PC-9 (cell line): ENCODE measurements at regions of chr12 and their contacts with region 1.

Region 1: DNA sequence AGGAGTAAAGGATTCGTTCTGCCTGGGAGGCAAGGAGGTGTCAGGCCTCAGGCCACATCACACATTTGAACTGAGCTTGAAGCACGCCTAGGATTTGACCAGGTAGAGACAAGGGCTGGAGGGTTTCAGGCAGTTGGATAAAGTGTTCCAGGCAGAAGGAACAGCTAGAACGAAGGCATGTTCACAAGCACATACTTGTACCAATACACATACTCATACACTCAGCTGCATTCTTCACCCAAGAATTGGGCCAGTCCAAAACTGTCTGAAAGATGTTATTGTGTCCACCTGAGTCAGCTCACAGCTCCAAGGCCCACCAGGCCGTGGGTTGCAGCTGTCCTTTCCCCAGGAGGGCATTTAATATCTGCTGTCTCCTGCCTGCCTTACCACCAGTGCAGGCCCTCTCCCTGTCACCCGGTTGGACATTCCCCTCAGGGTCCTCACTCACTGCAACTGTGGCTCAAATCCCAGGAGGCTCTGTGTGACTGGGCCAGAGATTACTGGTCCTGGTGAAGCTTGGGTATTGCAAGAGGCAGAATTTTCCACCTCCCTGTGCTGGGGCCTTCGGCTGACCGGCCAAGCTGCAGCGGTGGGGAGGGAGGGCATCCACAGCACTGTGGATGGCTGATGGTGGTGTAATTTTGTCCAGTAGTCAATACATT is 12.8 kb upstream of the AQP2 start:
- DNase-seq: no peak
- H3K4me3 ChIP-seq: no peak overlapping the region
- H3K27ac ChIP-seq: no peak overlapping the region
- H3K4me1 ChIP-seq: peaks cover 18% of the 10 kb centered on the region
- H3K27me3 ChIP-seq: no peaks in the 10 kb centered on the region
- CTCF ChIP-seq: no peak

Region 2: GRCh38 chr12:50006789-50007436 is 69.1 kb after region 1 on chr12:
- CTCF ChIA-PET with region 1: no interaction called
- POLR2A ChIA-PET with region 1: interaction called, 23 read pairs
- intact Hi-C with region 1: no loop called
- DNase-seq: no peak
- H3K4me3 ChIP-seq: no peak overlapping the region
- H3K27ac ChIP-seq: no peak overlapping the region
- H3K4me1 ChIP-seq: no peaks in the 10 kb centered on the region
- H3K27me3 ChIP-seq: no peaks in the 10 kb centered on the region
- CTCF ChIP-seq: no peak

Region 3: DNA sequence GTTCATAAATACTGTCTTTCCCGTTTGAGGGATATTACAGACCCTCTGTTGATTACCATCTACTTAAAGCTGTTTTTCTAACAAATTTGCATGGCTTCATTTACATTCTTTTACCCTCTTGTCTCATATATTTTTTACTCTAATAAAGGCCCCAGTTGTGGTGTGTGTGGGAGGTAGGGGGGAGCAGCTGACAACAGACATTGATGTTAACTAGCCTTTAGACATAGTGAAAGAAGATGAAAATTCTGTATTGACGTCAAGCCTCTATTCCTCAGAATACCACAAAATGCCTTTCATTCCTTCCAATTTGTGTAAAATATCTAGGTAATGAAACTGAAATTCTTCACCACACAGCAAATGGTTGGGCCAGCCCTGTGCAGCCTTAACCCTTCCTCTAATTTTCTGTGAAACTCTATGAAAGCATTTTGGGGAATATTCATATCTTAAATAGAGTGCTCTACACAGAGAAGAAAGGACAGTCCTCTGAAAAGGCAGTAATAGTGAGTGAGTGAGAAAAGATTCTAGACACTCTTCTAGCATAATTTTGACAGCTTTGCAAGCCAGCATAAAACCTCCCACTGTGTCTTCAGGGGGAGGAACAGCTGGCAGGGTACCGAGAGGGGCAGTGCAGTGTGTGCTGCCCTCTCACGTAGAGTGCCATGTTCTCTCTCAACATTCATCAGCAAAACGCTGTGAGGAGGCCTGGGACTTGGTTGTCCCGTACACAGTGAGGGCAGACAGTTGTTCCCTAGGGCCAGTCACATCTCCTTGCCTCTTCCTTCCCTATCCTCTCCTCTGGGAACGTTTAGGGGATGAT is 249.5 kb after region 1 on chr12:
- CTCF ChIA-PET with region 1: no interaction called
- POLR2A ChIA-PET with region 1: no interaction called
- intact Hi-C with region 1: no loop called
- DNase-seq: no peak
- H3K4me3 ChIP-seq: no peak overlapping the region
- H3K27ac ChIP-seq: no peak overlapping the region
- H3K4me1 ChIP-seq: no peaks in the 10 kb centered on the region
- H3K27me3 ChIP-seq: no peaks in the 10 kb centered on the region
- CTCF ChIP-seq: no peak